ENCODE measurements at regions of chr13 and their contacts with region 1.

Region 1: GRCh38 chr13:27923794-27924528 is 4.2 kb downstream of the PDX1 start:
- DNase-seq: no peak
- H3K4me3 ChIP-seq: no peak overlapping the region
- H3K27ac ChIP-seq: no peak overlapping the region
- H3K4me1 ChIP-seq: peaks cover 0 to 44% (median 33%) of the 10 kb centered on the region in 4 donors
- H3K27me3 ChIP-seq: peaks cover 100% of the 10 kb centered on the region
- CTCF ChIP-seq: no peak
- EP300 ChIP-seq: no peak
- POLR2A ChIP-seq: no peak

Region 2: DNA sequence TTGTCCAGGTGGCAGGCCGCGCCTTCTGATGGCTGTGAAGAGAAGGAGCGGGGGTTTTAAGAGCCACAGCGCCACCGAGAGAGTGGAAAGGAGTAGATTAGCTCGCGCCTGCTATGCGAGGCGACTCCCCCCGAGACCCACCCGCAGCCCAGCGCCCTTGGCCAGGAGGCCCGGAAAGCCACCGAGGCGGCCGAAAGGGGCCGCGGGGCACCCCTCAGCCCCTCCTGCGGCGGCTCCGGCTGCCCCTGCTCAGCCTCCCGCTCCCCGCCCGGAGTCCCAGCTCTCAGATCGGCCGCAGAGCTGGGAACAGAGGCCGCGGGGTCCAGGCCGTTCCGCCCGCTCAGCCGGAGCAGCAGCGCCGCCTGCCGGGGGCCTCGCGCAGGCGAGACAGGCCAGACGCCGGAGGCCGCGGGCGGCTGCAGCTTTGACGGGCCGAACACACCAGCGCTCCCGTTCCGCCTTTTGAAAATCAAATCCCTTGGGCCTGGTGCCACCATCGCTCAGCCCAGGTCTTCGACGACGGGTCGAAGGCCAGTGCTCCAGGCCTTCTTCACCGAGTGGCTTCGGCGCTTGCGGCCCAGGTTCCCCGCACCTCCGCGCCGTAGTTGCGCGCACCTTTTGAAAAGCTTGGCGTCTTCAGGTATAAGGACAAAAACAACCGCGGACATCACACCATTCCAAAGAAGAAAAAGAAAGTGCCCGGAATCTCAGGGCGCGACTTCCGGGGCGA is 29.9 kb after region 1 on chr13:
- in situ Hi-C with region 1: no loop called
- intact Hi-C with region 1: loop called (anchors 2 kb)
- DNase-seq: peak; percentile 87
- H3K4me3 ChIP-seq: peak overlapping the region; percentile 13 to 58 (median 46)
- H3K27ac ChIP-seq: peak overlapping the region; percentile 87 to 97 (median 92)
- H3K4me1 ChIP-seq: peaks cover 0 to 51% (median 12%) of the 10 kb centered on the region in 4 donors
- H3K27me3 ChIP-seq: peaks cover 82% of the 10 kb centered on the region
- CTCF ChIP-seq: peak; percentile 76 to 98 (median 87)
- EP300 ChIP-seq: no peak
- POLR2A ChIP-seq: peak; percentile 30

Measured in transverse colon (tissue), 4 donors.